ENCODE measurements at regions of chrX and their contacts with region 1.

Region 1: DNA sequence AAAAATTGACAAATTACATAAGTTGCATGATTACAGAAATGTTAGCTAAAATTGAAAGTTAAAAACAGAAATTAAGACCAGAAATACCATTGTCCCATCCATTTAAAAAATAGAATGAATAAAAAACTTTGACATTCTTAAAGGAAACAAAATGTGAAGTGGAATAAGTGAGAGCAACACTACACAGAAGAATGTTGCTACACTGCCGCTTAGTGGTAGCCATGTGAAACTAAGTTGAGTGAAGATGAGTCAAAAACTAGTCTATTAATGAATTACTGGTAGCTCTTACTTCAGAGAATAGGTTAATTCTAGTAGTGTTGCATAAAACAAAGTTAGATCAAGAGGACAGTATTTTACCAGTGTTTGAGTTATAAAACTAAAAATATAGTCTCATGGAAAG is 571.0 kb upstream of the KLHL4 start:
- DNase-seq: peak; percentile 3
- H3K4me3 ChIP-seq: no peak overlapping the region
- H3K27ac ChIP-seq: no peak overlapping the region
- H3K4me1 ChIP-seq: no peaks in the 10 kb centered on the region
- H3K27me3 ChIP-seq: no peaks in the 10 kb centered on the region
- CTCF ChIP-seq: peak; percentile 27 to 43
- POLR2A ChIP-seq: no peak

Region 2: GRCh38 chrX:85627363-85627762 is 1319.2 kb before region 1 on chrX:
- CTCF ChIA-PET with region 1: interaction called, 3 read pairs
- POLR2A ChIA-PET with region 1: no interaction called
- dilution Hi-C with region 1: no loop called
- intact Hi-C with region 1: loop called (anchors 5 kb)
- DNase-seq: no peak
- H3K4me3 ChIP-seq: no peak overlapping the region
- H3K27ac ChIP-seq: no peak overlapping the region
- H3K4me1 ChIP-seq: no peaks in the 10 kb centered on the region
- H3K27me3 ChIP-seq: no peaks in the 10 kb centered on the region
- CTCF ChIP-seq: no peak
- POLR2A ChIP-seq: no peak

Region 3: GRCh38 chrX:85851418-85851817 is 1095.2 kb before region 1 on chrX:
- CTCF ChIA-PET with region 1: interaction called, 19 read pairs
- POLR2A ChIA-PET with region 1: no interaction called
- dilution Hi-C with region 1: no loop called
- intact Hi-C with region 1: loop called (anchors 5 kb)
- DNase-seq: peak; percentile 1
- H3K4me3 ChIP-seq: no peak overlapping the region
- H3K27ac ChIP-seq: no peak overlapping the region
- H3K4me1 ChIP-seq: no peaks in the 10 kb centered on the region
- H3K27me3 ChIP-seq: no peaks in the 10 kb centered on the region
- CTCF ChIP-seq: peak in 1 of 2 donors; percentile 31
- POLR2A ChIP-seq: no peak

Region 4: DNA sequence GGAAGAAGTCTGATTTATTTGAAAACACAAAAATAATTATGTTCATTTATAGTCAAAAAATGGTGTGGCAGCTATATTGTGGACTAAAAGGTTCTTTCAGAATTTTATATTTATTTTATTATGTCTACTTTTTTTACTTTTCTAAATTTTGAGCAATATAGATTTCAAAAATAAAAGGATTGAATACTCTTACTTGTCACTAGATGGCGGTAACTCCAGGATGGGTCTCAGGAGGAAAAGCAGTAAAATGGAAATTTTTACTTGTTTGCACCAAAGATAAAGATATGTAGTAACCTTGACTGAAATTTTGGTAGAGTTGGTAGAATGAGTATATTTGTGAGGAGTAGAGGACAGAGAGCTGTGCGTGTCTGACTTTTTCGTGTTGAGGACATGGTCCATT is 812.8 kb before region 1 on chrX:
- CTCF ChIA-PET with region 1: interaction called, 7 read pairs
- POLR2A ChIA-PET with region 1: no interaction called
- dilution Hi-C with region 1: no loop called
- intact Hi-C with region 1: loop called (anchors 2 kb)
- DNase-seq: peak; percentile 4
- H3K4me3 ChIP-seq: no peak overlapping the region
- H3K27ac ChIP-seq: no peak overlapping the region
- H3K4me1 ChIP-seq: no peaks in the 10 kb centered on the region
- H3K27me3 ChIP-seq: no peaks in the 10 kb centered on the region
- CTCF ChIP-seq: peak in 1 of 2 donors; percentile 24
- POLR2A ChIP-seq: no peak

Region 5: GRCh38 chrX:86887341-86887740 is 59.2 kb before region 1 on chrX:
- CTCF ChIA-PET with region 1: no interaction called
- POLR2A ChIA-PET with region 1: no interaction called
- dilution Hi-C with region 1: no loop called
- intact Hi-C with region 1: no loop called
- DNase-seq: no peak
- H3K4me3 ChIP-seq: no peak overlapping the region
- H3K27ac ChIP-seq: no peak overlapping the region
- H3K4me1 ChIP-seq: no peaks in the 10 kb centered on the region
- H3K27me3 ChIP-seq: no peaks in the 10 kb centered on the region
- CTCF ChIP-seq: no peak
- POLR2A ChIP-seq: no peak

Region 6: GRCh38 chrX:86910602-86911311 is 35.8 kb before region 1 on chrX:
- CTCF ChIA-PET with region 1: no interaction called
- POLR2A ChIA-PET with region 1: no interaction called
- dilution Hi-C with region 1: no loop called
- intact Hi-C with region 1: no loop called
- DNase-seq: no peak
- H3K4me3 ChIP-seq: no peak overlapping the region
- H3K27ac ChIP-seq: no peak overlapping the region
- H3K4me1 ChIP-seq: no peaks in the 10 kb centered on the region
- H3K27me3 ChIP-seq: no peaks in the 10 kb centered on the region
- CTCF ChIP-seq: no peak
- POLR2A ChIP-seq: no peak